Naive thymus-derived CD4-positive, alpha-beta T cell (primary cell): ENCODE measurements at regions of chr17 and their contacts with region 1.

Region 1: DNA sequence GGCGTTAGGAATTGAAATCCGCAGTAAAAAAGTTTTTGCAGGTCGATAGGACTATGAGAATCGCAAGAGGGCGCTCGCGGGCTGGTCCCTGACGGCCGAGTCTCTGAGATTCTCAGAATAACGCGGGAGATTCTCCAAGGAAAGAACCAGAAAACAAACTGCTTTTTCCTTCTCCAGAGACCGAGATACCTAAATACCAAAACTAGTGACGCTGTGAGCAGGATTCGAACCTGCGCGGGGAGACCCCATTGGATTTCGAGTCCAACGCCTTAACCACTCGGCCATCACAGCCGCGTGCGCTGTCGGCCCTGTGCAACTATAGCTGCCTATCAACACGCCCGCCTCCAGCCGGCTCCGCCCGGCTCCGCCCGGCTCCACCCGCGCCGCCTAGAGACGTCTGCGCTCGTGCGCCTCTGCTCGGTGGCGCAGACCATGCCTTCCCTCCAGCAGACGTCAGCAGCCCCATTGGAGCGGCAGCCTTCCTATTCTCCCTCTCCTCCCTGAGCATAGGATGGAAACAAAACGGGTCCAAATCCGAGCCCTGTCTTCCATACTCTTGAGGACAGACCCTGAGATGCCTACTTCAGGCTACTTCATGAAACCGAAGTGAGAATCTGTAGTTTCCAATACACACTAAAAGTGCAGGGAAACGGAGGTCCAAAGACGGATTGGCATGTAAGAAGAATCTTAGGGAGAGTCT is 13.4 kb downstream of the PER1 start:
- DNase-seq: peak; percentile 93 to 99 (median 98)
- ATAC-seq: peak; percentile 90
- H3K4me3 ChIP-seq: peak overlapping the region; percentile 76
- H3K4me3 Mint-ChIP-seq: no peak overlapping the region
- H3K27ac ChIP-seq: peak overlapping the region; percentile 84
- H3K27ac Mint-ChIP-seq: no peak overlapping the region
- H3K4me1 ChIP-seq: peaks cover 8 to 17% of the 10 kb centered on the region in 2 donors
- H3K4me1 Mint-ChIP-seq: peaks cover 0 to 5% (median 0%) of the 10 kb centered on the region in 7 donors
- H3K27me3 ChIP-seq: no peaks in the 10 kb centered on the region
- H3K27me3 Mint-ChIP-seq: peaks cover 0 to 11% (median 0%) of the 10 kb centered on the region in 5 donors

Region 2: GRCh38 chr17:8029135-8029534 is 109.7 kb before region 1 on chr17:
- CTCF ChIA-PET with region 1: no interaction called
- POLR2A ChIA-PET with region 1: no interaction called
- intact Hi-C with region 1: no loop called
- DNase-seq: no peak
- ATAC-seq: peak; percentile 34
- H3K4me3 ChIP-seq: no peak overlapping the region
- H3K4me3 Mint-ChIP-seq: no peak overlapping the region
- H3K27ac ChIP-seq: no peak overlapping the region
- H3K27ac Mint-ChIP-seq: no peak overlapping the region
- H3K4me1 ChIP-seq: no peaks in the 10 kb centered on the region
- H3K4me1 Mint-ChIP-seq: peaks cover 0 to 9% (median 0%) of the 10 kb centered on the region in 7 donors
- H3K27me3 ChIP-seq: no peaks in the 10 kb centered on the region
- H3K27me3 Mint-ChIP-seq: peaks cover 29 to 58% (median 42%) of the 10 kb centered on the region in 5 donors

Region 3: DNA sequence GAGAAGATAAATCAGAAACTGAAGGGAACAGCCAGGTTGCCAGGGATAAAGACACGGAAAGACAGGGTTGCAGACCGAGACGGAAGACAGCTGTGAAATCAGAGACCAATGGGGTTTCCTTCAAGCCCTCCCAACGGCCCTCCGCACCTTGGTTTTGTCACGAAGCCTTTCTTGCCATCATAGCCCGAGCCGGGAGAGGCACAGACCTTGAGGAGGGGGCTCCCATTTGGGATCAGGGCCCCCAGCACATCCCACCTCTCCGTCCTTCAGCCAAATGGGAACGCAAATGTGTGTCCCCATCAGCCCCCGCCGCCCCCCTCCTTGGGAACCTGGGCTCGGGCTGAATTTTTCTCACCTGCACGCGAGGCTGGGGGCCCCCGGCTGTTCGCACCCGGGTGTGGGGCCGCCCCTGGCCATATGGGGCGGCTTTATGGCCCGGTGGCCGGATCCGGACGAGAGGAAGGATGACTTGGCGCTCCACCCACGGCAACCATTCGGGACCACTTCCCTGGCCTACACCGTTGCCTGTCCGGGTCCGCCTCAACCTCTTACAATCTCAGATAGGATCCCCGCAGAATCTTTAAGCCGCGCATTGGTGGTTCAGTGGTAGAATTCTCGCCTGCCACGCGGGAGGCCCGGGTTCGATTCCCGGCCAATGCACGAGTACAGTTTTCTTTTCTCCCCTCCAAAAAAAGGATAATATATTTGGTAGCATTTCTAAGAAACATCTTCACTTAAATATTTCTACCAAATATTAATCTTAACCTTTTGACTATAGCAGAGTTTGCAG is 13.5 kb before region 1 on chr17:
- CTCF ChIA-PET with region 1: interaction called, 26 read pairs
- POLR2A ChIA-PET with region 1: interaction called, 22 read pairs
- intact Hi-C with region 1: loop called (anchors 1 kb)
- DNase-seq: peak; percentile 82 to 97 (median 87)
- ATAC-seq: peak; percentile 63
- H3K4me3 ChIP-seq: peak overlapping the region; percentile 96
- H3K4me3 Mint-ChIP-seq: peak overlapping the region; percentile 88 to 99 (median 92)
- H3K27ac ChIP-seq: peak overlapping the region; percentile 50
- H3K27ac Mint-ChIP-seq: peak overlapping the region; percentile 80 to 99 (median 94)
- H3K4me1 ChIP-seq: peaks cover 46 to 50% of the 10 kb centered on the region in 2 donors
- H3K4me1 Mint-ChIP-seq: peaks cover 42 to 57% (median 51%) of the 10 kb centered on the region in 7 donors
- H3K27me3 ChIP-seq: peaks cover 0 to 3% of the 10 kb centered on the region in 2 donors
- H3K27me3 Mint-ChIP-seq: peaks cover 0 to 65% (median 27%) of the 10 kb centered on the region in 5 donors

Region 4: DNA sequence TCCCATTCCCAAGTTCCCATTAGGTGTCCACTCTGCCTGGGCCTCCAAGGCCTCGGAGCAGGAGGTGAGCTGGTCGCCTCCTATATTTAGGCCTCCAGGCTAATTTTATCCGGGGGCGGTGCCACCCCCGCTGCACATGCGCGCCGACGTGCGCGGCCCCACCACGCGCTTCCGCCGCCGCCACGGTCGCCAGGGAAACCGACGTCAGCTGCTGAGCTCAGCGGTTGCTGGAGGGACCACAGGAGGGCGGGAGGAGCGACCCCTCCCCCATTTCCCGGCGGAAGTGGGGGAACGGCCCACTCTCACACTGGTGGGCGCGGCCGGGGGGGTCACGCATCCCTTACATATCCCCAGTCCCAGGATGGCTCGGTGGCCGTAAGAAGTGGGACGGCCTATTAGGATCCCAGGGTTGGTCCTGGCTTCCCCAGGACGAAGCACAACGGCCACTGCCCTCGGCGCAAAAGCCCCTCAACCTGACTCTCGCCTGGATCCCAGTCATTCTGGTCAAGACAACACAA is 12.4 kb after region 1 on chr17:
- CTCF ChIA-PET with region 1: interaction called, 22 read pairs
- POLR2A ChIA-PET with region 1: interaction called, 136 read pairs
- intact Hi-C with region 1: loop called (anchors 1 kb)
- DNase-seq: peak; percentile 89 to 96 (median 93)
- ATAC-seq: peak; percentile 67
- H3K4me3 ChIP-seq: peak overlapping the region; percentile 80
- H3K4me3 Mint-ChIP-seq: peak overlapping the region in 6 of 10 donors; percentile 64 to 95 (median 91)
- H3K27ac ChIP-seq: peak overlapping the region; percentile 95
- H3K27ac Mint-ChIP-seq: peak overlapping the region in 2 of 9 donors; percentile 96 to 99
- H3K4me1 ChIP-seq: peaks cover 50 to 53% of the 10 kb centered on the region in 2 donors
- H3K4me1 Mint-ChIP-seq: peaks cover 0 to 68% (median 45%) of the 10 kb centered on the region in 7 donors
- H3K27me3 ChIP-seq: no peaks in the 10 kb centered on the region
- H3K27me3 Mint-ChIP-seq: no peaks in the 10 kb centered on the region

Region 5: GRCh38 chr17:8294814-8295316 is 156.0 kb after region 1 on chr17:
- CTCF ChIA-PET with region 1: interaction called, 20 read pairs
- POLR2A ChIA-PET with region 1: interaction called, 11 read pairs
- intact Hi-C with region 1: loop called (anchors 1 kb)
- DNase-seq: no peak
- ATAC-seq: no peak
- H3K4me3 ChIP-seq: peak overlapping the region; percentile 96
- H3K4me3 Mint-ChIP-seq: peak overlapping the region; percentile 87 to 97 (median 90)
- H3K27ac ChIP-seq: peak overlapping the region; percentile 86
- H3K27ac Mint-ChIP-seq: peak overlapping the region; percentile 81 to 98 (median 93)
- H3K4me1 ChIP-seq: peaks cover 4 to 13% of the 10 kb centered on the region in 2 donors
- H3K4me1 Mint-ChIP-seq: peaks cover 23 to 45% (median 38%) of the 10 kb centered on the region in 7 donors
- H3K27me3 ChIP-seq: no peaks in the 10 kb centered on the region
- H3K27me3 Mint-ChIP-seq: no peaks in the 10 kb centered on the region